ENCODE measurements at regions of chr2 and their contacts with region 1.

Region 1: DNA sequence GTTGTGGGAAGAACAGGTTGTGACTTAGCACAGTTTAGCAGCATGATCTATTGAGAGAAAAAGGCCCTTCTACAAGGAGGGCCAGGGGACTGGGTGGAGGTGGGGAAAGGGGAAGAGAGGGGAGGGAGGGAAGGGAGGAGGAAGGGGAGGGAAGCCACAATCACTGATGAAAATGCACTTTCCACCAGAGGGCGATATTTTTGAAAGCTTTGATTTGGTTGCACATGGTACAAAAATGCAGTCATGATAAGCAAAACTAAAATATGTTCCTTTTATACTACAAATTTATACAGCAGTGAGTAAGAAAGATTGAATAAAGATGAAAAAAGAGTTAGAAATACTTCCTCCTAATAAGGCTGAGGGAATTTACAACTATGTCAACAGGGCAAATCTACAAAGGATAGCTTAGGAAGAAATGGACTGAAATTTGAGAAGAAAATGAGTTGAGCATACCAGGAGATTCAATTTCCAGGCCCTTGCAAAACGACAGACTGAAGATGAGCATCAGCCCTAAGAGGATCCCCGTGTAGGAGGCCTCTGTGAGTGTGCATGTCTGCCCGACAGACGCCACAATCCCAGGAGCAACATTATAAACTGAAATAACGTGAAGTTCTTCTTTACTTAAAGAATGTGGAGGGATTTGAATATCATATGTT is 17.2 kb downstream of the SH3YL1 start:
- DNase-seq: no peak
- ATAC-seq: no peak
- H3K4me3 ChIP-seq: no peak overlapping the region
- H3K27ac ChIP-seq: no peak overlapping the region
- H3K4me1 ChIP-seq: no peaks in the 10 kb centered on the region
- H3K27me3 ChIP-seq: no peaks in the 10 kb centered on the region
- CTCF ChIP-seq: peak; percentile 49

Region 2: DNA sequence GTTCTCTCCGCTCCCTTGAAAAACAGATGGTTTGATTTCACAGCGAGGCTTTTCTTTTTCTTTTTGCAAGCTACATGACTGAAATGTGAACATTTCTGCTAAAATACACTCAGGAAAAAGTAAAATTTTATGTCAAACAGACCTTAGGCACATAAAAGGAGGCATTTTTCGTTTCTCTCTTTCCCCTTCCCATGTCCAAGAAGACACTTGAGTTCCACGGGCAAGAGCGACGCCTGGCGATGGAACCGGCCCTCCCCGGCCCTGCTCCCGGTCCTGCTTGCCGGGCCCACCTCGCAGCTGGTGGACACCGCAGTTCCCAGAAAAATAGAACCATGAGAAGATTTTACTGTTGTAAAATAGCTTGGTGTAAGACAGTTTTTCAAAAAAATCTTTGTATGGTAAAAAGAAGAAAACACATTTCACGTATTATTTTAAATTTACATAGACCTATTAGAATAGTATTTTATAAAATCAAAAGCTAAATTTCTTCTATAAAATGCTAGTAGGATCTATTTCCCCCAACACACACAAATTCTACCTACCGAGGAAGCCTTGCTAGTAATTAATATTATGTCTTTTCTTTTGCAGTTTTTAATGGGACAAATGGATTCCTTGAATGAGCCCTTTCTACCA is 43.6 kb after region 1 on chr2:
- intact Hi-C with region 1: loop called in 1 of 2 experiments (anchors 5 kb)
- DNase-seq: peak; percentile 68 to 83
- ATAC-seq: peak; percentile 69 to 93 (median 80)
- H3K4me3 ChIP-seq: peak overlapping the region; percentile 73
- H3K27ac ChIP-seq: no peak overlapping the region
- H3K4me1 ChIP-seq: peaks cover 9% of the 10 kb centered on the region
- H3K27me3 ChIP-seq: peaks cover 0 to 48% (median 11%) of the 10 kb centered on the region in 3 donors
- CTCF ChIP-seq: peak; percentile 67

Region 3: GRCh38 chr2:636641-637405 is 390.2 kb after region 1 on chr2:
- intact Hi-C with region 1: loop called in 1 of 2 experiments (anchors 10 kb)
- DNase-seq: peak; percentile 76 to 80
- ATAC-seq: peak; percentile 36 to 78 (median 52)
- H3K4me3 ChIP-seq: peak overlapping the region; percentile 58
- H3K27ac ChIP-seq: no peak overlapping the region
- H3K4me1 ChIP-seq: no peaks in the 10 kb centered on the region
- H3K27me3 ChIP-seq: peaks cover 0 to 12% (median 2%) of the 10 kb centered on the region in 3 donors
- CTCF ChIP-seq: peak; percentile 65

Measured in psoas muscle (tissue), 8 donors.